ENCODE measurements at regions of chr1 and their contacts with region 1.

Region 1: GRCh38 chr1:229258031-229258756 is 12.7 kb upstream of the RAB4A start:
- DNase-seq: peak; percentile 76
- H3K4me3 Mint-ChIP-seq: peak overlapping the region; percentile 43
- H3K27ac Mint-ChIP-seq: peak overlapping the region; percentile 76
- H3K4me1 Mint-ChIP-seq: peaks cover 32% of the 10 kb centered on the region
- H3K27me3 Mint-ChIP-seq: peaks cover 5% of the 10 kb centered on the region

Region 2: DNA sequence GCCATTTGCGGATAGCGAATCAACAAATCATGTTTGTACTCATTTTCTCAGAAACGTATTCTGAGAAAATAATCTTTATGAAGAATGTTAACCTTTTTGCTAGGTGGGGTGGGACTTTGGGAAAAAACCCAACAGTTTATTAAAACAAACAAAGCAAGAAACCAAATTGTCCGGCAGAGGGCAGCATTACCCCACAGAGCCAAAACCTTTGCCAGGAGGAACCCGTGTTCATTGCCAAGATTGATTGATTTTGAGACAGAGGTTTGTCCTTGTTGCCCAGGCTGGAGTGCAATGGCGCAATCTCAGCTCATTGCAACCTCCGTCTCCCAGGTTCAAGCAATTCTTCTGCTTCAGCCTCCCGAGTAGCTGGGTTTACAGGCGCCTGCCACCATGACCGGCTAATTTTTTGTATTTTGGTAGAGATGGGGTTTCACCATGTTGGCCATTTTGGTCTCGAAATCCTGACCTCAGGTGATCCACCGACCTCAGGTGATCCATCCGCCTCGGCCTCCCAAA is 593.7 kb before region 1 on chr1:
- CTCF ChIA-PET with region 1: interaction called, 49 read pairs
- DNase-seq: peak; percentile 86
- H3K4me3 Mint-ChIP-seq: no peak overlapping the region
- H3K27ac Mint-ChIP-seq: no peak overlapping the region
- H3K4me1 Mint-ChIP-seq: no peaks in the 10 kb centered on the region
- H3K27me3 Mint-ChIP-seq: peaks cover 24% of the 10 kb centered on the region

Region 3: GRCh38 chr1:228691926-228692325 is 566.3 kb before region 1 on chr1:
- CTCF ChIA-PET with region 1: interaction called, 11 read pairs
- DNase-seq: peak; percentile 49
- H3K4me3 Mint-ChIP-seq: no peak overlapping the region
- H3K27ac Mint-ChIP-seq: no peak overlapping the region
- H3K4me1 Mint-ChIP-seq: peaks cover 10% of the 10 kb centered on the region
- H3K27me3 Mint-ChIP-seq: peaks cover 29% of the 10 kb centered on the region

Region 4: GRCh38 chr1:228734881-228735801 is 523.1 kb before region 1 on chr1 and contains the start of gene RHOU:
- CTCF ChIA-PET with region 1: interaction called, 10 read pairs
- DNase-seq: peak; percentile 78
- H3K4me3 Mint-ChIP-seq: peak within 1 kb of the TSS; percentile 90
- H3K27ac Mint-ChIP-seq: peak within 1 kb of the TSS; percentile 83
- H3K4me1 Mint-ChIP-seq: peaks cover 38% of the 10 kb centered on the region
- H3K27me3 Mint-ChIP-seq: peaks cover 20% of the 10 kb centered on the region

Region 5: DNA sequence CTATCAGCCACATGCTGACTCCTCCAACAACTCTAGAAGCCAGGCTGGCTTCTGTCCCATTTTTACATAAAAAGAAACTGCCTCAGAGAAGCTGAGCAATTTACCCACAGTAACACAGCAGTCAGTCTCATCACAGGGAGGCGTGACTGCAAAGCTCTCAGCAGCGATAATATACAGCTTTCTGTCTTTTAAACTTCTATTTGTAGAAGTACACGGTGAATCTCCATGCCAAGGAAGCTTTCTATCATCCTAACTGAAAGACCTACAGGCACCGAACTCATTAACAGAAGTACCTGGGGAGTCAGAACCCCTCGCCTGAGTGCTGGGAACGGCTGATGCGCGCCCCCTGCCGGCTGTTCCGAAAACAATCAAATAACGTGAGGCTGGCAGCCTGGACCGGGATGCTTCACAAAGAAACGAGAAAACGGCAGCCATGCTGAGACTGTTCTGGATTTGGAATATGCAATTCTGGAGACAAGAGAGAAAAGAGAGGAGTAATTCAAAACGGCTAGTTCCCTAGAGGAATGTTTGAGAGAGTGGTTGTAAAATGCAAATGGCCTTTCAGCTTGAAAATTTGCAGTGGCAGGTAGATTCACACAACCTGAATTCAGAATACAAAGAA is 30.8 kb before region 1 on chr1:
- CTCF ChIA-PET with region 1: interaction called, 56 read pairs
- DNase-seq: peak; percentile 87
- H3K4me3 Mint-ChIP-seq: no peak overlapping the region
- H3K27ac Mint-ChIP-seq: no peak overlapping the region
- H3K4me1 Mint-ChIP-seq: peaks cover 20% of the 10 kb centered on the region
- H3K27me3 Mint-ChIP-seq: peaks cover 32% of the 10 kb centered on the region

Region 6: GRCh38 chr1:229479660-229480399 is 221.6 kb after region 1 on chr1:
- CTCF ChIA-PET with region 1: interaction called, 152 read pairs
- DNase-seq: no peak
- H3K4me3 Mint-ChIP-seq: no peak overlapping the region
- H3K27ac Mint-ChIP-seq: no peak overlapping the region
- H3K4me1 Mint-ChIP-seq: peaks cover 9% of the 10 kb centered on the region
- H3K27me3 Mint-ChIP-seq: no peaks in the 10 kb centered on the region

Region 7: DNA sequence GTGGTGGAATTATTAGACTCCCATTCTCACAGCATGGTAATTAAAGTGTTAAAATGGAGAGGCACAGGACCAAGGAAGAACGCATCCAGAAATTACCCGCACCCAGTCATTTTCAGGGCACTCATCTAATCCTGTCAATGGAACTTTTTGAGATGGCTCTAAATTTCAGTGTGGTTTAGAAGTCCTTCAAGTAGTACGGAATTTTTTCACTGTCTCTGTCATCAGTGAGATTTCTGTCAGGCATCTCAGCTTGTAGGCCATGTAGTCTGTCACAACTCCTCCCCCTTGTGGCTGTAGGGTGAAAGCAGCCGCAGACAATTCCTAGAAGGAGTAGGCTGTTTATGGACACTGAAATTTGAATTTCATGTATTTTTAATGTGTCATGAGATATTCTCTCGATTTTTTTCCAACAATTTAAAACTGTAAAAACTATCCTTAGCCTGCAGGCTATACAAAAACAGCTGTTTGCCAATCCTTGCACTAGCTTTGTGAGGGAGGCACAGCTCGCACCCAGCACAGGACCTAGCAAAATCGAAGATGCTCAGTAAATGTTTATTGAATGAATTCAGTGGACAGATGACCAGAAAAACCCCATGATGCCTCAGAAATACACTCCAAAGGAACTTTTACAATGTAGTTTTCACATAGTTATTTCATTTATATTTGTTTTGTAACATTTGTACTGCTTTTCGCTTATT is 256.5 kb after region 1 on chr1:
- CTCF ChIA-PET with region 1: interaction called, 18 read pairs
- DNase-seq: peak; percentile 73
- H3K4me3 Mint-ChIP-seq: no peak overlapping the region
- H3K27ac Mint-ChIP-seq: no peak overlapping the region
- H3K4me1 Mint-ChIP-seq: peaks cover 2% of the 10 kb centered on the region
- H3K27me3 Mint-ChIP-seq: no peaks in the 10 kb centered on the region